Right ventricle myocardium inferior (tissue), 1 donor: ENCODE measurements at regions of chr22 and their contacts with region 1.

Region 1: GRCh38 chr22:40645579-40646197 is 9.2 kb upstream of the MRTFA start:
- DNase-seq: no peak
- ATAC-seq: no peak

Region 2: DNA sequence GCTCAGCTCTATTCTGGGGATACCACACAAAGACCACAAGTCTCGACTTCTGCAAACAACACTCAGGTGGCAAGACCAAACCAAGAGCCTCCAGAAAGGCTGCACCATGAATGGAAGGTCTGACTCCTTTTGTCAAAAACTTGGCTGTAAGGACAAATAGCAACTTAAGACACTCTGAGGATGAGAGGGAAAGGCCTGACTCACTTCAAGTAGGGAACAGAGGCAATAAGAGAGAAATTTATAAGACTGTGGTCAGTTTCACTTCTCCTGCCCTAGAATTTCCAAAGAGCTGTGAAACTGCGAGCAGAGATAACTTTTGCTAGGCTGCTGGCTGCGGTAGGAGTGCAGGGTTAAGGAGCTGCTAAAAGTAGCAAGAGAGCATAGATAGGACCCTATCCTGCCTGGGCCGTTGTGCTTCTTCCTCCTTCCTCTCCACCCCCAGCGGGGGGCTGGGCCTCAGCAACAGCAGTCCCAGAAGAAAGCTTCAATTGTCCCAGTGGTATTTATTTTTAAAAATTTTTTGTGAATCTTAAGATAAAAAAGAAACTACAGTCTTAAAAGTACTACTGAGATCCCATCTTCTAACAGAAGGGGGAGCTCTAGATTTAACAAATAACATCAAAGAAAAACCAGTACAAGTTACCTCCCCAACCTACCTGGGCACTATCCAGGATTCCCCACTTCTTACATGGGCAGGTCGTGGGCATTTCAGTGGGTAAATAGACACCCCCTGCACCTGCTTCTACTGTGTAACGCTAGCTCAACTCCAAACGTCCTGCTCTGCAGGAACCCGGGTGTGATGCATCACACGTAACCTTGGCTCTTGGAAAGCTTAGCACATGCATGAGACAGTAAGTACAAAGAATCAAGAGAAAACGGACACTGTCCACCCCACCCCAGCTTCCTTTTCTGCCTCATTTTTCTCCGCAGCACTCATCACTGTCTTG is 208.9 kb before region 1 on chr22:
- intact Hi-C with region 1: loop called (anchors 1 kb)
- DNase-seq: no peak
- ATAC-seq: peak; percentile 73

Region 3: GRCh38 chr22:40525249-40525884 is 120.3 kb before region 1 on chr22:
- intact Hi-C with region 1: loop called (anchors 2 kb)
- DNase-seq: peak; percentile 69
- ATAC-seq: no peak

Region 4: DNA sequence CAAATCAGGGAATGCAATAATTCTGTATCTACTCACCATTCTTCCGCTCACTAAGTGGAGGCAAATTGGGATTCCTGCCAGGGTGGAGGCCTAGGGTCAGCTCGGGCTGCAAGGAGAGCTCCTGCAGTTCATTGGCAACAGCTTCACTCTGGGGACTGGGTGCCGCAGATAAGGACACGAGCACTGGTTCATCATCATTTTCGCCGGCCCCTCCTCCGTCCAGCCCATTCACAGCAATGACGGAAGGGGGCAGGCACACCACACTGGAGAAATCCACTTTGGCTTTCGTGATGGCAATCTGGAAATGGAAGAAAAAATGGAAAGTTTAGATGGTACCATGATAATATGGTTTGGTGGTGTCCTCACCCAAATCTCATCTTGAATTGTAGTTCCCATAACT is 93.6 kb before region 1 on chr22:
- intact Hi-C with region 1: loop called (anchors 5 kb)
- DNase-seq: peak; percentile 70
- ATAC-seq: peak; percentile 93